ENCODE measurements at regions of chrX and their contacts with region 1.

Region 1: GRCh38 chrX:154397819-154398724 is at the start of gene RPL10:
- DNase-seq: peak; percentile 92 to 98
- H3K4me3 ChIP-seq: peak within 1 kb of the TSS; percentile 93
- H3K27ac ChIP-seq: peak within 1 kb of the TSS; percentile 97
- H3K4me1 ChIP-seq: peaks cover 12% of the 10 kb centered on the region
- H3K27me3 ChIP-seq: no peaks in the 10 kb centered on the region
- CTCF ChIP-seq: no peak
- total RNA-seq, gene RPL10: 3,447 and 3,685 TPM in 2 replicates

Region 2: GRCh38 chrX:154348114-154348531 is 49.9 kb before region 1 on chrX:
- CTCF ChIA-PET with region 1: no interaction called
- POLR2A ChIA-PET with region 1: interaction called, 10 read pairs
- intact Hi-C with region 1: no loop called
- DNase-seq: peak in 1 of 2 experiments; percentile 19
- H3K4me3 ChIP-seq: no peak overlapping the region
- H3K27ac ChIP-seq: no peak overlapping the region
- H3K4me1 ChIP-seq: no peaks in the 10 kb centered on the region
- H3K27me3 ChIP-seq: no peaks in the 10 kb centered on the region
- CTCF ChIP-seq: no peak

Region 3: DNA sequence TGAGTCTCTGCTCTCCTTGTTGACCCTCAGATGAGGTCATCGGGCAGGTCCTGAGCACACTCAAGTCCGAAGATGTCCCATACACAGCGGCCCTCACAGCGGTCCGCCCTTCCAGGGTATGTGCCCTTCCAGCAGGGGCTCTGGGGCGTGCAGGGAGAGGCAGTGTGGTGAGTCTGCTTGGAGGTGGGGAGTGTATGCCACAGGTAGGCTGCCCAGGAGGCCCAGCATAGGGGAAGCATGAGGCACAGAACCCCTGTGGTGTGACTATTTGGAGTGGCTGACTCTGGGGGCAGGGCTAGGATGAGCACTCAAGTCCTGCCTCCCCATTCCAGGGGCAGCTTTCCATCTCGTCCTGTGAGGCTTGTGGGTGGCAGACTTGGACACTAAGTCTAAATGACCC is 35.5 kb after region 1 on chrX:
- CTCF ChIA-PET with region 1: no interaction called
- POLR2A ChIA-PET with region 1: no interaction called
- intact Hi-C with region 1: no loop called
- DNase-seq: no peak
- H3K4me3 ChIP-seq: no peak overlapping the region
- H3K27ac ChIP-seq: no peak overlapping the region
- H3K4me1 ChIP-seq: peaks cover 13% of the 10 kb centered on the region
- H3K27me3 ChIP-seq: no peaks in the 10 kb centered on the region
- CTCF ChIP-seq: no peak

Region 4: GRCh38 chrX:154443992-154444754 is 46.1 kb after region 1 on chrX and contains the start of gene FAM50A:
- CTCF ChIA-PET with region 1: no interaction called
- POLR2A ChIA-PET with region 1: no interaction called
- intact Hi-C with region 1: loop called (anchors 5 kb)
- DNase-seq: peak in 1 of 2 experiments; percentile 77
- H3K4me3 ChIP-seq: peak within 1 kb of the TSS; percentile 72
- H3K27ac ChIP-seq: no peak within 1 kb of the TSS
- H3K4me1 ChIP-seq: no peaks in the 10 kb centered on the region
- H3K27me3 ChIP-seq: no peaks in the 10 kb centered on the region
- CTCF ChIP-seq: no peak
- total RNA-seq, gene FAM50A: 82.1 and 89.4 TPM in 2 replicates

Region 5: DNA sequence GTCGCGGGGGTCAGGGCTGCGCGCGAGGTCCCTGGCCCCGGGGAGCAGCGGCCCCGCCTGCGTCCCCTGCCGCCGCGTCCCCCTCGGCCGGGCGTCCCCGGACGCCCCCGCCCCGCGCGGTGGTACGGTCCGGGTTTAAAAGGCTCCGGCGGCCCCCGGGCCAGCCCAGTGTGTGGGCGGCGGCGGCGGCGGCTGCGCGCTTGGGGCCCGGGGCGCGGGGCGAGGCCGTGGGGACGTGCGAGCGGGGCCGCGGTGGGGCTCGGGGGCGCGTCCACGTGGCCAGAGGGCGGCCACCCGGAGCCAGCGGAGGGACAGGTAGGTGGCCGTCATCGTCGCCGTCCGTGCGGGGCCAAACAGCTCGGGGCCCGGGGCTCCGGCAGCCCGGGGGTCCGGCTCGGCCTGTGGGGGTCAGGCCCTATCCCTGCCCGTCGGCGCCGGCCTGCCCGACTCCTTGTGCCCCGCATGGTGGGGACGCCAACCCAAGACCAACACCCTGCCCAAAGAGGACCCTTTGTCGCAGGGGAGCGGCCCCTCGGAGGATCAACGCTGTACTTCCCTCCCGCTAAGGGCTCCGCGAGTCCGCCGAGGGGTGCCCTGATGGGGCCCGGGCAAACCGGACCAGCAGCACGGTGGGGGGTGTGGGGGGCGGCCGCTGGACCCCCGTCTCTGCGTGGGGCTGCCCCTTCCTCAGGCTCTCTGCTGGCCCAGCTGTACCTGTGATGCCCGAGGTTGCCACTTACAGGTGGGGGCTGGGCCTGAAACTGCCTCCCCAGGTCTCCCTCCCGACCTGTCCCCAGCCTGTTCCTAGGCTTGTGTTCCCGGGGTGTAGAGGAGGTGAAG is 60.3 kb after region 1 on chrX and contains the start of gene PLXNA3:
- CTCF ChIA-PET with region 1: no interaction called
- POLR2A ChIA-PET with region 1: no interaction called
- intact Hi-C with region 1: loop called (anchors 5 kb)
- DNase-seq: peak in 1 of 2 experiments; percentile 76
- H3K4me3 ChIP-seq: peak within 1 kb of the TSS; percentile 66
- H3K27ac ChIP-seq: no peak within 1 kb of the TSS
- H3K4me1 ChIP-seq: peaks cover 5% of the 10 kb centered on the region
- H3K27me3 ChIP-seq: no peaks in the 10 kb centered on the region
- CTCF ChIP-seq: no peak
- total RNA-seq, gene PLXNA3: 109 and 124 TPM in 2 replicates

Region 6: DNA sequence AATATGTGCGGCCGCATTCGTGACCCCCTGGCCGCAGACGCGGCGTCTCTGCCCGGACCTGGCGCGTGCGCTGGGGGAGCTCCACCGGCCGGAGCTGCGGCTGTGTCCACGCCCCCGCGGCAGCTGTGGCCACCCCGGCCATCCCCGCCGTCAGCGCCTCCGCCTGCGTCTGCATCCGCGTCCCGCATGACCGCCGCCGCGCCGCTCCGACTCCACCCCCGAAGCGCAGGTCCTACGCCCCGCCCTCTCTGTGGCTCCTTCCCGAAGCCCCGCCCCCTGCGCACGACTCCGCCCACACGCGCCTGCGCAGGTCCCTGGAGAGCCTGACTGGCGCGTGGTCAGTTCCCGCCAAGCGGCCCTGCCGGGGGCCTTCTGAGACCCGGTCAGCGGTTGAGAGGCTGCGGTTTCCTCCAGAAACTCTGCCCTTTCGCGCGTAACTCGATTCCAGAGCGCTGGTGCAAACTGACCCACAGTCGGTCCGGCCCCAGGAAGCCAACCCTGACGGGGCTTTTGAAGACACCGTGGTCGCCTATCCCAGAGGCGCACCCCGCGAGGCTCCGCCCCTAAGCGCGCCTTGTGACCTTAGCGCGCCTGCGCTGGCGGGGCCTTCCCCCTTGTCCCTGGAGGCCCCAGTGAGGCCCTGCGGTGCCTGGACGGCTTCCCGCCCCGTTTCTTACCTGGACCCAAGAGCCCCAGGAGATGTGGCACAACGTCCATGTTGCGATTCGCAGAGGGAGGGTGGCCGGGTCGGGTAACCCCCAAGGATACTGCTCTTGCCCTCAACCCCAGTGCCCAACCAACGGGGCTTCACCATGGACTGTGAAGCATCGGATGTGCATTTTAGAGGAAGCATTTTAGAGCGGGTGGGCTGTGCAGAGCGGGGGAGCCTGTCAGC is 80.9 kb after region 1 on chrX and contains the start of gene LAGE3:
- CTCF ChIA-PET with region 1: no interaction called
- POLR2A ChIA-PET with region 1: interaction called, 14 read pairs
- intact Hi-C with region 1: no loop called
- DNase-seq: peak; percentile 73 to 99
- H3K4me3 ChIP-seq: peak within 1 kb of the TSS; percentile 60; the same call in 1 of the 2 replicates
- H3K27ac ChIP-seq: no peak within 1 kb of the TSS
- H3K4me1 ChIP-seq: peaks cover under 1% of the 10 kb centered on the region
- H3K27me3 ChIP-seq: no peaks in the 10 kb centered on the region
- CTCF ChIP-seq: no peak
- total RNA-seq, gene LAGE3: 63.9 and 82.5 TPM in 2 replicates

Region 7: GRCh38 chrX:154490414-154491083 is 92.5 kb after region 1 on chrX and contains the start of gene SLC10A3:
- CTCF ChIA-PET with region 1: no interaction called
- POLR2A ChIA-PET with region 1: interaction called, 5 read pairs
- intact Hi-C with region 1: loop called (anchors 5 kb)
- DNase-seq: peak; percentile 87 to 97
- H3K4me3 ChIP-seq: peak within 1 kb of the TSS; percentile 66
- H3K27ac ChIP-seq: peak within 1 kb of the TSS; percentile 68
- H3K4me1 ChIP-seq: peaks cover 14% of the 10 kb centered on the region; the same call in 1 of the 2 replicates
- H3K27me3 ChIP-seq: no peaks in the 10 kb centered on the region
- CTCF ChIP-seq: no peak
- total RNA-seq, gene SLC10A3: 38.3 and 54.9 TPM in 2 replicates

Region 8: GRCh38 chrX:154502989-154503388 is 104.9 kb after region 1 on chrX:
- CTCF ChIA-PET with region 1: no interaction called
- POLR2A ChIA-PET with region 1: no interaction called
- intact Hi-C with region 1: no loop called
- DNase-seq: no peak
- H3K4me3 ChIP-seq: no peak overlapping the region
- H3K27ac ChIP-seq: no peak overlapping the region
- H3K4me1 ChIP-seq: peaks cover 14% of the 10 kb centered on the region
- H3K27me3 ChIP-seq: no peaks in the 10 kb centered on the region
- CTCF ChIP-seq: no peak

Region 9: GRCh38 chrX:154534862-154535670 is 137.0 kb after region 1 on chrX:
- CTCF ChIA-PET with region 1: no interaction called
- POLR2A ChIA-PET with region 1: no interaction called
- intact Hi-C with region 1: loop called (anchors 5 kb)
- DNase-seq: peak; percentile 51 to 89
- H3K4me3 ChIP-seq: no peak overlapping the region
- H3K27ac ChIP-seq: no peak overlapping the region
- H3K4me1 ChIP-seq: peaks cover 26% of the 10 kb centered on the region
- H3K27me3 ChIP-seq: no peaks in the 10 kb centered on the region
- CTCF ChIP-seq: peak; percentile 85